ENCODE measurements at regions of chr9 and their contacts with region 1.

Region 1: GRCh38 chr9:35945341-35946018 is 12.5 kb downstream of the OR2S2 start:
- DNase-seq: peak; percentile 81
- ATAC-seq: peak; percentile 79
- H3K4me3 Mint-ChIP-seq: no peak overlapping the region
- H3K27ac Mint-ChIP-seq: no peak overlapping the region
- H3K4me1 Mint-ChIP-seq: peaks cover 20% of the 10 kb centered on the region
- H3K27me3 Mint-ChIP-seq: no peaks in the 10 kb centered on the region
- CTCF ChIP-seq: peak; percentile 96

Region 2: DNA sequence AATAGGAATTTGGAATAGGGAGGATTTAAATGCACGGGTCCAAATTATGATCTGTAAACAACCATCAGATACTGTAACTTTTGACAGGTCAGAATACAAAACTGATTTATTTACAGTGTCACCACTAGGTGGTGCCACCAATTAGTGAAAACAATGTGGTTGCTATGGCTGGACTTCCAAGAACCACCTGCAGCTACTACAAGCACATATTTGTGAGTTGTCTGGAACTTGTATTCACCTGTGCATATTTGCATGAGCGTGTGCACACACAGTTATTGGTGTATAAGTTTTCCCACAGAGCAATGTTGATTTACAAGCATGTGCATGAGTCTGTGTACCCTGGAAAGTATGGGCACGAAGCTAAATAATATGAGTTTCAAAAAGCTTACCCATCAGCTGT is 42.4 kb before region 1 on chr9:
- CTCF ChIA-PET with region 1: interaction called, 147 read pairs
- POLR2A ChIA-PET with region 1: interaction called, 3 read pairs
- intact Hi-C with region 1: loop called (anchors 5 kb)
- DNase-seq: peak; percentile 35
- ATAC-seq: peak; percentile 67
- H3K4me3 Mint-ChIP-seq: no peak overlapping the region
- H3K27ac Mint-ChIP-seq: no peak overlapping the region
- H3K4me1 Mint-ChIP-seq: peaks cover 9% of the 10 kb centered on the region
- H3K27me3 Mint-ChIP-seq: peaks cover 3% of the 10 kb centered on the region
- CTCF ChIP-seq: peak; percentile 93

Region 3: GRCh38 chr9:35910613-35911359 is 34.7 kb before region 1 on chr9:
- CTCF ChIA-PET with region 1: interaction called, 147 read pairs
- POLR2A ChIA-PET with region 1: no interaction called
- intact Hi-C with region 1: loop called (anchors 5 kb)
- DNase-seq: peak; percentile 68
- ATAC-seq: peak; percentile 75
- H3K4me3 Mint-ChIP-seq: no peak overlapping the region
- H3K27ac Mint-ChIP-seq: peak overlapping the region; percentile 85
- H3K4me1 Mint-ChIP-seq: peaks cover 47% of the 10 kb centered on the region
- H3K27me3 Mint-ChIP-seq: no peaks in the 10 kb centered on the region
- CTCF ChIP-seq: peak; percentile 38

Region 4: DNA sequence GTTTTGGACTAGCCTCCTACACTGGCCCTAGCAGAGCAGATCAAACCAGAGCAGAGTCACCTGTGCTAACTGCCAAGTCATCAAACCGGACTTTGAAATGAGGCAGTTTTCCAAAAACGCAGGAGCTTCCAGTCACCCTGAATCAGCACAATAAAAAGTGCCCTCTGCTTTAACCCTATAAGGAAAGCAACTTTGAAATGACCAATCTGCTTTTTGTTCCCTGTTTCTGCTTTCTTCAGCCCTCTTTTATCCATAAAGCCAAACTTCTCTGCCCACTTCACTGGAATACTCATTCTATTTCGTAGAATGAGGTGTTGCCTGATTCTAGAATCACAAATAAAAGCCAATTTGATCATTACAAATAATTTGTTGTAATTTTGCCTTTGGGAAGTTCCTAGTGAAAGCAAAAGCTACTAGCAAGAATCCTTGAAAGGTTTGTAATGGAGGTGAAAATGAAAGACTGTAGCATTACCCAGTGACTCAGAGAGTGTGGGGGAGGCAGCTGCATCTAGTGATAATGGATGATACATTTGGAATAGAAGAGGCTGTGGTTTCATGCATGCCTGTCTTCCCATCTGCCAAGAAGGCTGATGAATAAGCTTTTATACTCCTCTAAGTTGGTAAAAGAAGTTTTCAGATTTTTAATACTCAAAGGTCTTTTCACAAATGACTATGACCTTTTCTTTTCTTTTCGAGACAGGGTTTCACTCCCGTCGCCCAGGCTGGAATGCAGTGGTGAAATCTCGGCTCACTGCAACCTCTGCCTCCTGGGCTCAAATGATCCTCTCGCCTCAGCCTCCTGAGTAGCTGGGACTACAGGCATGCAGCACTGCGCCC is 21.3 kb before region 1 on chr9:
- CTCF ChIA-PET with region 1: interaction called, 28 read pairs
- POLR2A ChIA-PET with region 1: interaction called, 3 read pairs
- intact Hi-C with region 1: no loop called
- DNase-seq: peak; percentile 72
- ATAC-seq: peak; percentile 91
- H3K4me3 Mint-ChIP-seq: no peak overlapping the region
- H3K27ac Mint-ChIP-seq: no peak overlapping the region
- H3K4me1 Mint-ChIP-seq: peaks cover 17% of the 10 kb centered on the region
- H3K27me3 Mint-ChIP-seq: no peaks in the 10 kb centered on the region
- CTCF ChIP-seq: no peak

Region 5: DNA sequence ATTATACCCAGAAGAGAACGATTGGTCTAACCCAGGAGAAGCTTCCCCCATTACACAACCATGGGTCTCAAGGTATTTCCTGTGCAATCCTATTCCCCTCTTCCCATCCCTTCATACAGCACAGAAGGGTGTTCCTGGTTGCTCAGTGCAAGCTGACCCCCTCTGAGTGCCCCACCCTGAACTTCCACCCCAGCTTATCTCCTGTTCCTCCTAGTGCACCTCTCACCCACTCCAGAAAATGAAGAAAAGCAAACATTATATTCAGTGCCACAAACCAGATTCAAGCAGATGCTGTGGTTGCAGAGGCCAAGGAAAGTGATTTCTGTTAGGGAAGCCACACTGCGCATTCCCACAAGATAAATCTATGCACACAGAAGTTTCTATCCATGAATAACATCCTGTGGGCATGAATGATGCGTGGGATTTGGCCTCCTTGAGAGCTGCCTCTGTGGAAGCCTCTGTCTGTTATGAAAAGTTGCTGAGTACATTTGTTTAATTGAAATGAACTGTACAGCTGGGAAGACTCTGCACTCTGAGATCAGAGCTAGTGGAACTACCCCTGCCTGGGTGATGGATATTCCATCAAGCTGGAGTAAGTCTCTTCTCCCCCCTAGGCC is 14.7 kb after region 1 on chr9:
- CTCF ChIA-PET with region 1: interaction called, 53 read pairs
- POLR2A ChIA-PET with region 1: no interaction called
- intact Hi-C with region 1: no loop called
- DNase-seq: no peak
- ATAC-seq: no peak
- H3K4me3 Mint-ChIP-seq: no peak overlapping the region
- H3K27ac Mint-ChIP-seq: no peak overlapping the region
- H3K4me1 Mint-ChIP-seq: no peaks in the 10 kb centered on the region
- H3K27me3 Mint-ChIP-seq: no peaks in the 10 kb centered on the region
- CTCF ChIP-seq: no peak